HAP-1 (cell line): ENCODE measurements at regions of chr4 and their contacts with region 1.

Region 1: GRCh38 chr4:21780158-21780557 is 168.4 kb downstream of the KCNIP4 start:
- DNase-seq: no peak
- H3K4me3 ChIP-seq: no peak overlapping the region
- H3K4me1 ChIP-seq: no peaks in the 10 kb centered on the region
- H3K27me3 ChIP-seq: 0 out of 2 replicates have a peak, but pooled peaks cover 3% of the 10 kb centered on the region

Region 2: GRCh38 chr4:21901831-21902230 is 121.7 kb after region 1 on chr4:
- in situ Hi-C with region 1: no loop called
- DNase-seq: no peak
- H3K4me3 ChIP-seq: no peak overlapping the region
- H3K4me1 ChIP-seq: no peaks in the 10 kb centered on the region
- H3K27me3 ChIP-seq: no peaks in the 10 kb centered on the region

Region 3: GRCh38 chr4:22389240-22389870 is 609.2 kb after region 1 on chr4:
- in situ Hi-C with region 1: loop called (anchors 10 kb)
- DNase-seq: peak; percentile 41 to 67
- H3K4me3 ChIP-seq: no peak overlapping the region
- H3K4me1 ChIP-seq: peaks cover 9% of the 10 kb centered on the region; the same call in 1 of the 2 replicates
- H3K27me3 ChIP-seq: no peaks in the 10 kb centered on the region